ENCODE measurements at regions of chr1 and their contacts with region 1.

Region 1: GRCh38 chr1:160665330-160666078 is 18.7 kb upstream of the SLAMF1 start:
- DNase-seq: no peak
- ATAC-seq: no peak
- H3K4me3 ChIP-seq: no peak overlapping the region
- H3K27ac ChIP-seq: no peak overlapping the region
- H3K4me1 ChIP-seq: no peaks in the 10 kb centered on the region
- H3K27me3 ChIP-seq: no peaks in the 10 kb centered on the region
- CTCF ChIP-seq: no peak
- POLR2A ChIP-seq: no peak
- RAD21 ChIP-seq: no peak

Region 2: GRCh38 chr1:160646711-160647328 is 18.7 kb before region 1 on chr1 and contains the start of gene SLAMF1:
- CTCF ChIA-PET with region 1: interaction called, 3 read pairs
- POLR2A ChIA-PET with region 1: no interaction called
- dilution Hi-C with region 1: no loop called
- in situ Hi-C with region 1: no loop called
- intact Hi-C with region 1: loop called (anchors 1 kb)
- DNase-seq: no peak
- ATAC-seq: no peak
- H3K4me3 ChIP-seq: no peak within 1 kb of the TSS
- H3K27ac ChIP-seq: no peak within 1 kb of the TSS
- H3K4me1 ChIP-seq: no peaks in the 10 kb centered on the region
- H3K27me3 ChIP-seq: no peaks in the 10 kb centered on the region; the same call in 1 of the 2 replicates
- CTCF ChIP-seq: no peak
- POLR2A ChIP-seq: no peak
- RAD21 ChIP-seq: no peak
- total RNA-seq, gene SLAMF1: not detected in 2 replicates

Region 3: GRCh38 chr1:160724465-160725242 is 59.1 kb after region 1 on chr1:
- CTCF ChIA-PET with region 1: no interaction called
- POLR2A ChIA-PET with region 1: no interaction called
- dilution Hi-C with region 1: no loop called
- in situ Hi-C with region 1: no loop called
- intact Hi-C with region 1: no loop called
- DNase-seq: no peak
- ATAC-seq: no peak
- H3K4me3 ChIP-seq: no peak overlapping the region
- H3K27ac ChIP-seq: no peak overlapping the region
- H3K4me1 ChIP-seq: no peaks in the 10 kb centered on the region
- H3K27me3 ChIP-seq: no peaks in the 10 kb centered on the region; the same call in 1 of the 2 replicates
- CTCF ChIP-seq: no peak
- POLR2A ChIP-seq: no peak
- RAD21 ChIP-seq: no peak